ENCODE measurements at regions of chr1 and their contacts with region 1.

Region 1: GRCh38 chr1:51768971-51769588 is 109.4 kb downstream of the NRDC start:
- DNase-seq: peak; percentile 73
- H3K4me3 ChIP-seq: no peak overlapping the region
- H3K27ac ChIP-seq: no peak overlapping the region
- H3K4me1 ChIP-seq: no peaks in the 10 kb centered on the region
- CTCF ChIP-seq: peak; percentile 95

Region 2: DNA sequence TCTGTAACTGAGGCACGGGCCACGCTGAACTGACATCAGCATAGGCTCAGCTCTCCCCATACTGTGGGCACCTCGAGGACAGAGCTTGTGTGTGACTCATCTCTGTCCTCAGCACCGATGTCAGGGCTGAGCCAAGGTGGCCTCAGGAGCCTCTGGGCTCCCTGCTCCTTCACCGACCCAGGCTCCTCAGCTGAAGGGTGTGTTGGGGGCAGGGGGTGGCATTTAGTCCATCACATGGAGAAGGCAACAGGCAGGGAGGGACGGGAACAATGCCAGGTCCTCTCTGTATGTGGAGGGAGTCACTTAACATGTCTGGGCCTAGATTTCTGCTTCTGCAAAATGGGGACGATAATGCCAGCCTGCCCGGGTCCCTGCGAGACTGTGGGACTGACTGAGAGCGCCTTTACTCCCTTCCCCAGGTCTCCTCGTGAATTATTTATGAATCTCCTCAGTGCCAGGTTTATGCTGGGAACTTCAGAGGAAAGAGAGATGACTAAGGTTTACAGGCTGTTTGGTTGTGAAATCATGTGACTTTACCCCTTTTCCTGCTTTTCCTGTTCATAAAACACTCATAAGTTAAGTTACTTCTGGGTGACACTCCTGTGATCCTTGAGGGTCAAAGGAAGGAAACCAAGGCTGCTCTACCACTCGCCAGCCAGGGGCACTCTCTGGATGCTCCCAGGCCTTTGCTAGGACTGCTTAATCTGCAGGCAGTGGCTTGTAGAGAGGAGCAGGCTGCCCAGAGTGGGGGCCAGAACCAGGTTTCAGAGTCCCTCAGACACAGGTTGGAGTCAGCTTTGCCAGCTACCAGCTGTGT is 454.9 kb before region 1 on chr1:
- CTCF ChIA-PET with region 1: no interaction called
- POLR2A ChIA-PET with region 1: no interaction called
- intact Hi-C with region 1: no loop called
- DNase-seq: no peak
- H3K4me3 ChIP-seq: no peak overlapping the region
- H3K27ac ChIP-seq: no peak overlapping the region
- H3K4me1 ChIP-seq: no peaks in the 10 kb centered on the region
- CTCF ChIP-seq: no peak

Region 3: GRCh38 chr1:51627678-51628077 is 141.4 kb before region 1 on chr1:
- CTCF ChIA-PET with region 1: no interaction called
- POLR2A ChIA-PET with region 1: interaction called, 4 read pairs
- intact Hi-C with region 1: loop called (anchors 2 kb)
- DNase-seq: peak; percentile 50
- H3K4me3 ChIP-seq: no peak overlapping the region
- H3K27ac ChIP-seq: no peak overlapping the region
- H3K4me1 ChIP-seq: no peaks in the 10 kb centered on the region
- CTCF ChIP-seq: peak; percentile 77

Measured in OCI-LY7 (cell line).